Posterior vena cava (tissue), 2 donors: ENCODE measurements at regions of chr1 and their contacts with region 1.

Region 1: GRCh38 chr1:162069328-162070093 is at the start of gene NOS1AP:
- DNase-seq: peak; percentile 92
- total RNA-seq, gene NOS1AP: 3.7 to 5.0 TPM

Region 2: DNA sequence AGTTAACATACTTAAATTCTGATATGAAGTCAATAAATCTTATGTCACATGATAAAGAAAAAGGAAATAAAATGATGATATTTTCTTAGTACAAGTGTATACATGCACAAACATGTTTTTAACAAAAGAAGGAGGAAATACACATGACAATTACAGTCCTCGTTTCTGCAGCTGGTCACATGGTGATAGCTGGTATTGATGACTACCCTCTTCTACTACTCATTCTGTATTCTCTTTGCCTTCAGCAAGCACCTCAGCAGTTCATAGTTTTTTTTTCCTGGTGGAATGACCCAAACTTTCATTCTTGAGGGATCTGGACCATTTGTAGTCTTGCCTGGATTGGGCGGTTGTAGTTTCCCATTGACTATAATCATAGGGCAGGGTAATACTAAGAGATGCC is 637.4 kb before region 1 on chr1:
- intact Hi-C with region 1: no loop called
- DNase-seq: no peak

Region 3: DNA sequence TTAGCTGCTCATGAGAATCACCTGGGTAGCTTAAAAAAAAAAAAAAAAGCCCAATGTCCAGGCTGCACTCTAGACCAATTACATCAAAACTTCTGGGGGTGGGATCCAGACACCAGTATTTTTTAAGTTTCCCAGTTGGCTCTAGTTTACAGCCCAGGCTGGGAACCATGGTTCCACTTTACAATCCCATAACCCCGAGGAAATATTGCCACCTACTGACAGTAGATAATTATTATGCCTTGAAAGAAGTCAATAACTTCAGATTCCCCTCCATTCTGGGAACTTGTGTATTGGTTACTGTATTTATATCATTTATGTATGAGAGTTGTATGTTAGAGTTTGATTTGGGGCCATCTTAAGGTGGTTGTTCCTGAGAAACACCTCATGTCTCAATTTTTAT is 207.0 kb after region 1 on chr1:
- intact Hi-C with region 1: loop called in 1 of 2 experiments (anchors 10 kb)
- DNase-seq: no peak